HepG2 (cell line): ENCODE measurements at regions of chr6 and their contacts with region 1.

Region 1: DNA sequence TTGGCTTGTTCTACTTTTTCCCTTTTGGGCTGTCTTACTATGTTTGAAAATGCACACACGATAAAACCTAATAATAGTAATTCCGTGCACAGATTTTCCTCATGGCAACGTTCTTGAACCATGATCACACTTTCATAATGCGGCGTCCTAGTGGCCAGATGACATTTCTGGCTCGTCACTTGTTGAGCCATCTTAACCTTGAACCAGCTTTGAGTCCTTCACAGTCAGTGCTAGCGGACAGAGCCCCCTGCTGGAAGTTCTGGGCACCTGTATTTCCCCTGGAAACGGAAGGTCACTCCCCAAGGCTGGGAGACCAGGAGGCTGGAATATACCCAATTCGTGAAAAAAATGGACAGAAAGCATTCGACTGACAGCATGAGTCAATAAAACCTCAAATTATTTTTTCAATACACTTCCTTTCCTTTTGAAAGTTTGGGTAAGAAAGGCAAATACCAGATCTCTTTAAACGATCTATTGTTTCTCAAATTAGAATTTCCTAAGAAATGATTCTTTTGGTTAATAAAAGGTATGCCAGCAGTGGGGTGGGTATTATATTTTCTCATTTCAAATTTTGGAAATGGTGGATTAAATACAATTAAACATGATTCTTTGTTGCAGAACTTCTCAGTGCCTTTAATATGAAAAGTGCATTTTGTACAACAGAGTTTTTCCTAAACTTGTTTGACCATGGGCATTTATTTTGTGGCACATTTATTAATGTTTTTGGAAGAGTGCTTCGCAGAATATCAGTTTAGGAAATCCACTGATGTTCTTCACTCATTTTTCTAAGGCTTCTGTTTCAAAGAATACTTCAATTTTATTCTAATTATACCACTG is 542.3 kb downstream of the QKI start:
- DNase-seq: peak; percentile 82
- ATAC-seq: peak; percentile 98
- H3K4me3 ChIP-seq: no peak overlapping the region
- H3K27ac ChIP-seq: no peak overlapping the region
- H3K4me1 ChIP-seq: no peaks in the 10 kb centered on the region
- H3K27me3 ChIP-seq: peaks cover 0 to 36% of the 10 kb centered on the region in 2 experiments; a peak in 2 of 5 replicates
- CTCF ChIP-seq: peak; percentile 93
- EP300 ChIP-seq: peak in 1 of 2 experiments; percentile 24; a peak in 1 of 4 replicates
- POLR2A ChIP-seq: no peak
- RAD21 ChIP-seq: peak; percentile 86

Region 2: GRCh38 chr6:162856885-162857284 is 1099.9 kb before region 1 on chr6:
- CTCF ChIA-PET with region 1: no interaction called
- POLR2A ChIA-PET with region 1: no interaction called
- in situ Hi-C with region 1: no loop called
- intact Hi-C with region 1: loop called (anchors 2 kb)
- DNase-seq: peak; percentile 64
- ATAC-seq: peak; percentile 98
- H3K4me3 ChIP-seq: no peak overlapping the region
- H3K27ac ChIP-seq: no peak overlapping the region
- H3K4me1 ChIP-seq: no peaks in the 10 kb centered on the region
- H3K27me3 ChIP-seq: no peaks in the 10 kb centered on the region
- CTCF ChIP-seq: peak; percentile 73
- EP300 ChIP-seq: no peak
- POLR2A ChIP-seq: no peak
- RAD21 ChIP-seq: peak; percentile 56

Region 3: DNA sequence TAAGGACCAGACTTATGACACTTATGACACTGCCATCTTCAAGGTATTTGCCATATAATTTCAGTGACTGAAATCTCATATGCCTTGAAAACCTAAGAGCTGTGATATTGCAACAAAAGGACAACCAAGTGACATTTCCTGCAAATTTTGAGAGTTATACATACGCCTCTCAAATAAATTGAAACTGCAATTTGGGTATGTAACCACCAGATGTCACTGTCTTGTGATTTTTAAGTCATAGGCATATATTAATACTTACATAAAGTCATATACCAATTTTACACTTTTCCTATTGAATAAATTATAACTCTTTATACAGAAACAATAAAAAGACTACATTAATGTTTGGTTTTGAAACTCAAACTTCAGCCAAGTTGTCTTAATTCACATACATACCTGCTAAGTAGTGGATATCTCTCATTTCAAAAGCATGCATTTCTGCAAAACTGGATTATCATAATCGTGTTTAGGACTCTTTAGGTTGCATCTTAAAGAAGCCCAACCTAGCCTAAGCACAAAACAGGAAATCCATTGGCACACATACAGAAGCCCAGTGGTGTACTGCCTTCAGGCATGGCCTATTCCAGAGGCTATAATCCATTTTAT is 1048.8 kb before region 1 on chr6:
- CTCF ChIA-PET with region 1: interaction called, 14 read pairs
- POLR2A ChIA-PET with region 1: no interaction called
- in situ Hi-C with region 1: no loop called
- intact Hi-C with region 1: loop called (anchors 1 kb)
- DNase-seq: peak; percentile 7
- ATAC-seq: no peak
- H3K4me3 ChIP-seq: no peak overlapping the region
- H3K27ac ChIP-seq: no peak overlapping the region
- H3K4me1 ChIP-seq: no peaks in the 10 kb centered on the region
- H3K27me3 ChIP-seq: no peaks in the 10 kb centered on the region
- CTCF ChIP-seq: peak; percentile 54
- EP300 ChIP-seq: no peak
- POLR2A ChIP-seq: no peak
- RAD21 ChIP-seq: no peak

Region 4: GRCh38 chr6:163579880-163580295 is 376.9 kb before region 1 on chr6:
- CTCF ChIA-PET with region 1: no interaction called
- POLR2A ChIA-PET with region 1: no interaction called
- in situ Hi-C with region 1: no loop called
- intact Hi-C with region 1: loop called (anchors 5 kb)
- DNase-seq: no peak
- ATAC-seq: peak; percentile 19; the same call in 2 of the 3 replicates
- H3K4me3 ChIP-seq: no peak overlapping the region
- H3K27ac ChIP-seq: no peak overlapping the region
- H3K4me1 ChIP-seq: peaks cover 6% of the 10 kb centered on the region
- H3K27me3 ChIP-seq: no peaks in the 10 kb centered on the region
- CTCF ChIP-seq: no peak; the same call in 1 of the 2 replicates
- EP300 ChIP-seq: no peak
- POLR2A ChIP-seq: no peak
- RAD21 ChIP-seq: no peak

Region 5: GRCh38 chr6:164142322-164142721 is 185.5 kb after region 1 on chr6:
- CTCF ChIA-PET with region 1: no interaction called
- POLR2A ChIA-PET with region 1: no interaction called
- in situ Hi-C with region 1: no loop called
- intact Hi-C with region 1: no loop called
- DNase-seq: no peak
- ATAC-seq: no peak
- H3K4me3 ChIP-seq: no peak overlapping the region
- H3K27ac ChIP-seq: no peak overlapping the region
- H3K4me1 ChIP-seq: no peaks in the 10 kb centered on the region
- H3K27me3 ChIP-seq: no peaks in the 10 kb centered on the region
- CTCF ChIP-seq: no peak
- EP300 ChIP-seq: no peak
- POLR2A ChIP-seq: no peak
- RAD21 ChIP-seq: no peak